ENCODE measurements at regions of chr4 and their contacts with region 1.

Region 1: DNA sequence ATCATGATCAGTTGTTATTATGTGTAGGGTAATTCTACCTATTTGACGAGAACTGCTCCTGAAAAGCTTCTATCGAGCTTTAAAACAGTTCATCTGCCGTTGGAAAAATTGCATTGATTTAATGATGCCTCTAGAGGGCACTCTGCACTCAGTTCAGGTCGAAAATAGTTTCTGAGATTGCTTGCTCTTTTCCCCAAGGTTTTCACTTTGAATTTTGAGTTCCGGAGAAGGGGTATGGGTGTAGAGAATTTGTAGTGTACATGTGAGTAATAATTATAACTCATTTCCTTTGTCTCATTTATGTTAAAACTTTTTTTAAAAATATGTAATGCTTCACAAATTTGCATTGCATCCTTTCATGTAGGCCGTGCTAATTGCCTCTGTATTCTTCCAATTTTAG is 28.4 kb upstream of the TNIP3 start:
- DNase-seq: peak; percentile 75
- H3K4me3 Mint-ChIP-seq: peak overlapping the region; percentile 53
- H3K27ac Mint-ChIP-seq: no peak overlapping the region
- H3K4me1 Mint-ChIP-seq: peaks cover 45% of the 10 kb centered on the region
- H3K27me3 Mint-ChIP-seq: no peaks in the 10 kb centered on the region

Region 2: DNA sequence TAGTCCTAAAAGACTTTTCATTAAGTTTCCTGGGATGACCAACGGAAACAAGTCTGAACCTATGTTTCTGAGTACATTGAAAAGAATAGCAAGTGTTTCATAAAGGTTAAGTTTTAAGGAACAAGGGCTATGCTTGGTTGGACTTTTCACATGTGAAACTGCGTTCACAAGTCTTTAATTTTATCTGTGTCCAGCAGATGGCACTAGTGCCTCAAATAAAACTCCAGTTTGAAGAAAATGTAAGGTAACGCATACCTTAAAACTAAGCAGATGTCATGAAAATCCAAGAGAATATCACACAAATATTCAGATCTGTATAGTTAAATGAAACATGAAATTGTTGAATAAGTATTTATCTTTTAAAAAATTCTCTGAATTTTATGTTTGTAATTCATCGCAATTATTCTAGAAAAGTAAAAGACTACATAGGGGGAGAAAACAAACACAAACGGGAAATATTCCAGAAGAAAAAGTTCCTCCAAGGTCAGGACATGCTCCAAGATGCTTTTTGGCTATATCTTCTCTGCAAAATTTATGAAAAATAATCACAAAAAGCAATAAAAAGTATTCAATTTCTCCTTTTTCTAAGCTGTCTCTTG is 1036.3 kb before region 1 on chr4:
- intact Hi-C with region 1: loop called (anchors 10 kb)
- DNase-seq: peak; percentile 81
- H3K4me3 Mint-ChIP-seq: no peak overlapping the region
- H3K27ac Mint-ChIP-seq: no peak overlapping the region
- H3K4me1 Mint-ChIP-seq: no peaks in the 10 kb centered on the region
- H3K27me3 Mint-ChIP-seq: peaks cover 8% of the 10 kb centered on the region

Region 3: GRCh38 chr4:121096629-121097028 is 95.9 kb before region 1 on chr4:
- intact Hi-C with region 1: no loop called
- DNase-seq: no peak
- H3K4me3 Mint-ChIP-seq: no peak overlapping the region
- H3K27ac Mint-ChIP-seq: no peak overlapping the region
- H3K4me1 Mint-ChIP-seq: no peaks in the 10 kb centered on the region
- H3K27me3 Mint-ChIP-seq: peaks cover 23% of the 10 kb centered on the region

Region 4: GRCh38 chr4:121112530-121112929 is 80.0 kb before region 1 on chr4:
- intact Hi-C with region 1: loop called (anchors 2 kb)
- DNase-seq: no peak
- H3K4me3 Mint-ChIP-seq: no peak overlapping the region
- H3K27ac Mint-ChIP-seq: no peak overlapping the region
- H3K4me1 Mint-ChIP-seq: peaks cover 11% of the 10 kb centered on the region
- H3K27me3 Mint-ChIP-seq: peaks cover 31% of the 10 kb centered on the region

Region 5: DNA sequence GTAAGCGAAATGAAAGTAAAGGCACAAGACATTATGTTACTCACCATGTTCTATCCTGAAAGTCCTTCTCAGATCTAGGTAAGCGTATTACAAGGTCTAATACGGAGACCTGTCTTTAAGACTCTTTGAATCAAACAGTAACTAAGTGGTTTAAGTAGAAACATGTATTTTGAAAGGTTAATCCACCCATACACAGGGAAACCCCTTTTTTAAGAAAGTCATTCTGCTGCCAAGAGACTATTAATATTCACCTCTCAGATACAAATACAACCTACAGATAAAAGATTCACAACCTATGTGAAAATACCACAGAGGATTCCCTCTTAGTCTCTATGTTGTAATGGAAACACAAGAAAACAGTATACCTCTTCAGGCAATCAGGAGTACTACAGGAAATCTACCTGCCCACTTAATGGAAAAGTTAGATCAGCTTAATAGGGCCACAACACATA is 34.9 kb after region 1 on chr4:
- intact Hi-C with region 1: loop called (anchors 1 kb)
- DNase-seq: no peak
- H3K4me3 Mint-ChIP-seq: peak overlapping the region; percentile 63
- H3K27ac Mint-ChIP-seq: peak overlapping the region; percentile 19
- H3K4me1 Mint-ChIP-seq: peaks cover 18% of the 10 kb centered on the region
- H3K27me3 Mint-ChIP-seq: peaks cover 3% of the 10 kb centered on the region

Region 6: DNA sequence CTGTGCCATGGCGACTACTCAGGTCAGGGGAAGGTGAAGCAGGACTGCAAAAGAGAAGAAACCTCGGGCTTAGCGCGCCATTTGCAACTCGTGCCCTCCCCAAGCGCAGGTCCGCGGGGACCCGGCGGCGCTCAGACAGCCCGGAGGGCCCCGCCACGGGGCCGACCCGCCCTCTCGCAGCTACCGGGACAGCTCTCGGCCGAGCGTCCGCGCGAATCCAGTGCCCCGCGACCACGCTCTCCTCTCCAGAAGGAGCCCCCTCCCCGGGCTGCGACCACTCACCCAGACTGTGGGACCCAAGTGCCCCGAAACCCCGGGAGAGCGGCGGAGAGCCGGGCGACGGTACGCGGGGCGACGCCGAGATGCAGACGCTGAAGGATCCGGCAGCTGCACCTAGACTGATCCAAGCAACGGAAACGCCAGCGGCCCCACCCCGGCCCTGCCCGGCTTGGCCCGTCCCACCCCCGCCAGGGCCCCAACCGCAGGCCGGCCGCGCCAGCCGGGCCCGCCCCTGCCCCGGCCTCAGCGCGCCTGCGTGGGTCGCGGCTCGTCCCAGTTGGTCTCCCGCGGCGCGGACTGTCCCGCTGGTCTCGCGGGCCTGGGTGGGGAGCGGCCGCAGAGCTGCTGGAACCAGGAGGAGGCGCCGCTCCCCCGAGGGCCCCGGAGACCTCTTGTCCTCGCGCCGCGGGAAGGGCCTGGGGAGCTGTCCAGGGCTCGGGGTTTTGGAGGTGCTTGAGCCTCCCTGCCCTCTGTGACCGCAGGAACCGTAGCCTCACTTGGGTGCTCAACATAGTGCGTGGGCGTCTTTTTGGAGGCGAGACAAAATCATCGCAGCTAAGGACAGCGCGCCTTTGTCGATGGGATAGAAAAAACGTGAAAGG is 504.3 kb after region 1 on chr4 and contains the start of gene ANXA5:
- intact Hi-C with region 1: loop called (anchors 2 kb)
- DNase-seq: peak; percentile 94
- H3K4me3 Mint-ChIP-seq: peak within 1 kb of the TSS; percentile 98
- H3K27ac Mint-ChIP-seq: peak within 1 kb of the TSS; percentile 100
- H3K4me1 Mint-ChIP-seq: peaks cover 39% of the 10 kb centered on the region
- H3K27me3 Mint-ChIP-seq: peaks cover 33% of the 10 kb centered on the region
- total RNA-seq, gene ANXA5: 107 TPM in 2 replicates

Region 7: DNA sequence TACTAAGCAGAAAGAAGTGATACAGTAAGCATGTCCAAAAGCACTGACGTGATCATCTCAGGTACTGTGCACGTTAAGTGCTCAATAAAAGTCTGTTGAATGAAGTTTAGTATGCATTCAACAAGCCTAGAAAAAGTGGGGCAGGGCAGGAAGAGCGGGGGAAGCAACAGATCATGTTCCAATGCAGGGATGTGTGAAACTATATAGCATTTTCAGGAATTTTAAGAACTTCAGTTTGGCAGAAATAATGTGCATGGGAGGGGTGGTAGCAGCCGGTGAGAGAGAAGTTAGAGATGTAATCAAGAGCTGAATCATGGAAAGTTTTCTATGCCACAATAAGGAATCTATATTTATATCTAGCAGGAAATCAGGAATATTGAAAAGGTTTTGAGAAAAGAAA is 650.4 kb after region 1 on chr4:
- intact Hi-C with region 1: no loop called
- DNase-seq: no peak
- H3K4me3 Mint-ChIP-seq: no peak overlapping the region
- H3K27ac Mint-ChIP-seq: no peak overlapping the region
- H3K4me1 Mint-ChIP-seq: no peaks in the 10 kb centered on the region
- H3K27me3 Mint-ChIP-seq: no peaks in the 10 kb centered on the region

Measured in activated CD4-positive, alpha-beta T cell treated with anti-CD3 and anti-CD28 coated beads, Interleukin-2, amount 10 ng/mL, durations not matched to agents 24 days and 14 days (primary cell).